ENCODE measurements at regions of chr17 and their contacts with region 1.

Region 1: DNA sequence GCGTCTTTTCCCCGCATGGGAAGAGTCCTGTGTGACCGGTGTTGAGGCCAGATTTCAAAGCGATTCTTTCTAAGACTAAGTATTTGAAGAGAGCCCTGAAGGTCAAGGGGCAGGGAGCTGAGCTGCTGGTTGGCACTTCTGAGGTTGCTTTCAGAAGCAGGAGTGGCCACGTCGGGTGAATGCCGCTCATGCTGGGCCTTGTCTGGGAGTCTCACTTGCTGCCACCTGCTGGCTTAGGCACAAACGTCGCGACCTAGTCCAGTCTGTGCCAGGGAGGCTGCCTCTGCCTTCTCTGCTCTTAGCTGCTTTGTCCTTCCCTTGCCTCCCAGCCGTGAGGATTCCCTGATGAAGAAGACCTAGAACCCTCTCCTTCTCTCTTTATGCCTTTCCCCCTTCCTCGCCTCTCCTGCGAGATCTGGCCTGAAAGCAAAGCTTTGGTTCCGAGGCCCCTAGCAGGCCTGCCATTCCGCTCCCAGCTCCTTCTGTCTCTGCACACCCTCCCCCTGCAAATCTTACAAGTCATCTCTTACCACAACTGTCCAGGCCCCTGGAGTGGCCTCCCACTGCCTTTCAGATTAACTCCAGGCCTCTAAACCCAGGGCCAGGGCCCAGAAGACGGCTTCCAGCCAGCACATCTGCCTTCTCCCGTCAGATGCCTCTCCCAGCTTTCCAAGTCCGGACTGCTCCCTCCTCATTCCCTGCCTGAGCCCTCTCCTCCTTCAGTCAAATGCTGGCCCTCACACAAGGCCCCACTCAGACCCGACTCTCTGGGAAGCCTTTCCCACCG is 11.4 kb downstream of the CTNS start:
- DNase-seq: peak; percentile 28
- H3K4me3 ChIP-seq: no peak overlapping the region
- H3K27ac ChIP-seq: no peak overlapping the region
- H3K4me1 ChIP-seq: no peaks in the 10 kb centered on the region
- H3K27me3 ChIP-seq: no peaks in the 10 kb centered on the region
- CTCF ChIP-seq: peak; percentile 31 to 62

Region 2: DNA sequence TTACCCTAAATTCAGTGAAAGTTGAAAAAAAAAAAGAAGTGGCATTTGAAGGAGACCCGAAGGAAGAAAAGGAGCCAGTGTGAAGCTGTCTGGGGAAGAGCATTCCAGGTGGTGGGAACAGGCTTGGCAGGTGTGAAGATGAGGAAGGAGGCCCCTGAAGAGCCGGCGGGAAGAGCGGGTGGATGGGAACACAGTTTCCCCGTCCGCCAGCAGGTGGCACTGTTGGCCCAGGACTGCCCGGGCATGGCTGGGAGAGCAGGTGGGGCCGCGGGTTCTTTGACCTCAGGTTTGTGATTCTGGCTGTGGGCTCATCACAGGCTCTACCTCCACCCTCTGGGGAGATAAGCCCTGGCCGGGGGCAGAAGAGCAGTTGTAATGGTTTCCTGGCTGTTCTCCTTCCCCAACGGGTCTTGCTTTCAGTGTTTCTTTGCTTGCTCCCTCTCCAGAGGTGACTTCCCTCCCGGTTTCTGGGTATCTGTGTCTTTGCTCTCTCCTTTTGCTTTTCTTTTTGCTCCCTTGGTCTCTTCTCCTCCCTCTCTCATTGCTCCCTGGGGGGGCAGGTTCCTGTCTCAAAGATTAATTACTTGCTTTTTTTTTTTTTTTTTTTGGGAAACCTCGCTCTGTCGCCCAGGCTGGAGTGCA is 819.4 kb before region 1 on chr17:
- CTCF ChIA-PET with region 1: no interaction called
- dilution Hi-C with region 1: no loop called
- in situ Hi-C with region 1: loop called in 1 of 2 experiments (anchors 25 kb)
- intact Hi-C with region 1: loop called (anchors 1 kb)
- DNase-seq: peak; percentile 40
- H3K4me3 ChIP-seq: no peak overlapping the region
- H3K27ac ChIP-seq: no peak overlapping the region
- H3K4me1 ChIP-seq: no peaks in the 10 kb centered on the region
- H3K27me3 ChIP-seq: no peaks in the 10 kb centered on the region
- CTCF ChIP-seq: peak; percentile 80 to 98

Region 3: DNA sequence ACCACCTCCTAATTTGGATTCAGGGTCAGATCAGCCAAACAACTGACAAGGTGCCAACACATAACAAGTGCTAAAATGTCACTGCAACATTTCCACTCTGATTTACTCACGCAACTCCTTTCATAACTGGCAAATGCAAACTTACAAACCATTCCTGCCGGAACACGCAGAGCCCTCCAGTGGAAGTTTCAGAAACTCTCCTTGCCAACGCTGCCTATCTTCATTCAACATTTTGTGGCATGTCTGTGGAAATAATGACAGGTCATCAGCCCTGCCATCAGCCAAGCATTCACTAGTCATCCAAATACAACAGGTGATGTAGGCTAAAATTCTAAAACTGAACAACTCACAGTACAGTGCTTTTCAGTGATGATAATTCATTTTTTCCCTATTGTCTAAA is 312.1 kb before region 1 on chr17:
- CTCF ChIA-PET with region 1: no interaction called
- dilution Hi-C with region 1: no loop called
- in situ Hi-C with region 1: no loop called
- intact Hi-C with region 1: loop called (anchors 10 kb)
- DNase-seq: peak; percentile 14
- H3K4me3 ChIP-seq: no peak overlapping the region
- H3K27ac ChIP-seq: no peak overlapping the region
- H3K4me1 ChIP-seq: no peaks in the 10 kb centered on the region
- H3K27me3 ChIP-seq: no peaks in the 10 kb centered on the region
- CTCF ChIP-seq: peak in 1 of 2 donors; percentile 38

Region 4: DNA sequence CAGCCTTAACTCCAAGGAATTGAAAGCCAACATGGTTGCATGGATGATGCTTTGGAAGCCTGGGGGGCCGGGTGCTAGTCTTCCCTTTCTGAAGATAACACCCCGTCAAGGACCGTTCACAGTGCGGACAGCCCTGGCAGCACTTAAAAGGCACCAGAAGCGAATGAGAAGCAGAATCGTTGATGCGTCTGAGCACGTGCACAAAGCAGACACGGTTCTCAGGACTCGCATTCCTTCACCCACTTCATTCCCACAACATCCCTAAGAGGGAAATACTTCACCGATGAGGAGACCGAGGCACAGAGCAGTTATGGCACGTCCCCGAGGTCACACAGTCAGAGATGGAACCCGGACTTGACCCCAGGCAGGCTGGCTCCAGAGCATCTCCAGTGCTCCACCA is 53.0 kb before region 1 on chr17:
- CTCF ChIA-PET with region 1: no interaction called
- dilution Hi-C with region 1: loop called (anchors 5 kb)
- in situ Hi-C with region 1: no loop called
- intact Hi-C with region 1: no loop called
- DNase-seq: no peak
- H3K4me3 ChIP-seq: no peak overlapping the region
- H3K27ac ChIP-seq: no peak overlapping the region
- H3K4me1 ChIP-seq: no peaks in the 10 kb centered on the region
- H3K27me3 ChIP-seq: no peaks in the 10 kb centered on the region
- CTCF ChIP-seq: no peak

Region 5: GRCh38 chr17:3738562-3739295 is 90.8 kb after region 1 on chr17:
- CTCF ChIA-PET with region 1: no interaction called
- dilution Hi-C with region 1: no loop called
- in situ Hi-C with region 1: no loop called
- intact Hi-C with region 1: no loop called
- DNase-seq: peak; percentile 76
- H3K4me3 ChIP-seq: peak overlapping the region in 1 of 3 experiments; percentile 19
- H3K27ac ChIP-seq: no peak overlapping the region
- H3K4me1 ChIP-seq: peaks cover 10% of the 10 kb centered on the region
- H3K27me3 ChIP-seq: no peaks in the 10 kb centered on the region
- CTCF ChIP-seq: no peak

Region 6: GRCh38 chr17:3762922-3763776 is 115.2 kb after region 1 on chr17:
- CTCF ChIA-PET with region 1: no interaction called
- dilution Hi-C with region 1: no loop called
- in situ Hi-C with region 1: no loop called
- intact Hi-C with region 1: no loop called
- DNase-seq: no peak
- H3K4me3 ChIP-seq: no peak overlapping the region
- H3K27ac ChIP-seq: no peak overlapping the region
- H3K4me1 ChIP-seq: no peaks in the 10 kb centered on the region
- H3K27me3 ChIP-seq: no peaks in the 10 kb centered on the region
- CTCF ChIP-seq: no peak

Region 7: GRCh38 chr17:3802461-3803307 is 154.7 kb after region 1 on chr17:
- CTCF ChIA-PET with region 1: no interaction called
- dilution Hi-C with region 1: loop called (anchors 5 kb)
- in situ Hi-C with region 1: no loop called
- intact Hi-C with region 1: no loop called
- DNase-seq: peak; percentile 48
- H3K4me3 ChIP-seq: no peak overlapping the region
- H3K27ac ChIP-seq: no peak overlapping the region
- H3K4me1 ChIP-seq: peaks cover 12% of the 10 kb centered on the region
- H3K27me3 ChIP-seq: no peaks in the 10 kb centered on the region
- CTCF ChIP-seq: no peak